Activated naive CD4-positive, alpha-beta T cell treated with anti-CD3 and anti-CD28 coated beads for 36 hours (primary cell): ENCODE measurements at regions of chr4 and their contacts with region 1.

Region 1: GRCh38 chr4:184474263-184475095 is at the start of gene IRF2:
- DNase-seq: peak; percentile 99
- H3K4me3 Mint-ChIP-seq: peak within 1 kb of the TSS; percentile 98
- H3K27ac Mint-ChIP-seq: peak within 1 kb of the TSS; percentile 100
- H3K4me1 Mint-ChIP-seq: peaks cover 49% of the 10 kb centered on the region
- H3K27me3 Mint-ChIP-seq: no peaks in the 10 kb centered on the region
- total RNA-seq, gene IRF2: 37.3 to 38.3 TPM

Region 2: DNA sequence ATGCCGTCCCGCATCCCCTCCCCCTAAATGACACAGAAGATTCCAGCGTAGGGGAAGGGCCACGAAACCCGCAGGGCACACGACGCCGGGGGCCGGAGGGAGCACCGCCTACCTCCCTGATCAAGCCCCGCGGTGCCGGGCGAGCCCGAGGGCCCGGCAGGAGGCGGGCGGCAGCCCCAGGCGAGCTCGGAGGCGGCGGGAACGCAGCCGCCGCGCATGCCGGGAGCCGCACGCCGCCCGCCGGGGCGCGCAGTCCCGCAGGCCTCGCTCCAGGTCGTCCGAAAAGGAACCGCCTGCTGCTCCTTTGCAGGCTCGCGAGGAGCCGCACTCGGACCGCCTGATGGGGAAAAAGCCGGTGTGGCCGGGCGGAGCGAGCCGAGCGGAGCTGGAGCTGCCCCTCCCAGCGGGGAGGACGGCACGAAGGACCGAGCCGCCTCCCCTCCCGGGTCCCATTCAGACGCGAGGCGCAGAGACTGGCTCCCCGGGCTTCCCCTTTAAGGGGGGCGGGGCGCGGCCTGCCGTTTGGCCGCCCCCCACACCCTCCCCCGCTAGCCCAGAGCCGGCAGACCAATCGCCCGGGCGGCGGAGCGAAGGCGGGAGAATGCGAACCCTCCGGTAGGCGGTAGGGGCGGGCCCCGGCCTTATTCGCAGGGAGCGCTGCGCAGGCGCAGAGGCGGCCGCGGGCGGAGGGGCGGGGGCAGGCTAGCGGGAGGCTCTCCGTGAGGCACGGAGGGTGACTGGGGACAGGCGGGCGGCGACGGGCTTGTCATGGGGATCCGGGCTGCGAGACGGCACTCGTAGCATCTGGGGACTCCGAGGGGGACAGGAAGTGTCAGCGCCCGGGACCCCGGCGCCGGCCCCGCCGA is 970.2 kb before region 1 on chr4:
- CTCF ChIA-PET with region 1: no interaction called
- intact Hi-C with region 1: loop called (anchors 10 kb)
- DNase-seq: peak; percentile 98
- H3K4me3 Mint-ChIP-seq: peak overlapping the region; percentile 91
- H3K27ac Mint-ChIP-seq: peak overlapping the region; percentile 93
- H3K4me1 Mint-ChIP-seq: peaks cover 39% of the 10 kb centered on the region
- H3K27me3 Mint-ChIP-seq: no peaks in the 10 kb centered on the region

Region 3: GRCh38 chr4:184074989-184075388 is 399.5 kb before region 1 on chr4:
- CTCF ChIA-PET with region 1: no interaction called
- intact Hi-C with region 1: no loop called
- DNase-seq: no peak
- H3K4me3 Mint-ChIP-seq: no peak overlapping the region
- H3K27ac Mint-ChIP-seq: no peak overlapping the region
- H3K4me1 Mint-ChIP-seq: no peaks in the 10 kb centered on the region
- H3K27me3 Mint-ChIP-seq: peaks cover 19% of the 10 kb centered on the region

Region 4: GRCh38 chr4:184310171-184310567 is 164.3 kb before region 1 on chr4:
- CTCF ChIA-PET with region 1: no interaction called
- intact Hi-C with region 1: loop called (anchors 2 kb)
- DNase-seq: peak; percentile 69
- H3K4me3 Mint-ChIP-seq: no peak overlapping the region
- H3K27ac Mint-ChIP-seq: no peak overlapping the region
- H3K4me1 Mint-ChIP-seq: peaks cover 32% of the 10 kb centered on the region
- H3K27me3 Mint-ChIP-seq: peaks cover 3% of the 10 kb centered on the region

Region 5: DNA sequence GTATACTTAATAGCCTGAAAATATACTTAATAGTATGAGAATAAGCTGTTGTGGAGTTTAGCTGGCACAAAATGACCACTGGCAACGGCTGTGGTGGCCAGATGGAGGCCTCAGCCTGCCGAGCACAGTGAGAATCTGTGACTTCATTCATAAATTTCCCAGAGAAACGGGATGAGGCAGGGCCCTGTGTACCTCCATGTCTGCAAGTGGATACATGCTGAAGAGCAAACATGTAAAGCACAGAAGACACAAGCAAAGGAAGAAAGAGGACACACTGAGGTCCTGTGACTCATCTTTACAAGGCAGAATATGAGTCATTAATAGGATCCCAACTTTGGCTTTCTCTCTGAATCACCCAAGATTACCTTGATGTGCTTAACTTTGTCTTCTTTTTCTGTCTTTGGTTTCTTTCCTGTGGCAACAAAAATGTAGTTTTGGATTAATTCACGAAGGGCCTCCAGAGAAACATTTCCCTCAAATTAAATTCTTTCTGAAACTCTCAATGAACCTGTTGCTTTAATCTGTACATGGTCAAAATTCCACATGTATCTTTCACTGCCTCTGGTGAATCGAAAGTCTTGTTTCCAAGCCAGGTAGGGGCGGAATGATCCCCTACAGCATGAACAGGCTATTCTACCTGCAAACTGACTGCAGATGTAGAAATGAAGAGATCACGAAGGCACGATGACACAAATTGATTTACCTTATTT is 56.5 kb before region 1 on chr4:
- CTCF ChIA-PET with region 1: no interaction called
- intact Hi-C with region 1: loop called (anchors 1 kb)
- DNase-seq: peak; percentile 27
- H3K4me3 Mint-ChIP-seq: no peak overlapping the region
- H3K27ac Mint-ChIP-seq: peak overlapping the region; percentile 73
- H3K4me1 Mint-ChIP-seq: peaks cover 84% of the 10 kb centered on the region
- H3K27me3 Mint-ChIP-seq: no peaks in the 10 kb centered on the region

Region 6: DNA sequence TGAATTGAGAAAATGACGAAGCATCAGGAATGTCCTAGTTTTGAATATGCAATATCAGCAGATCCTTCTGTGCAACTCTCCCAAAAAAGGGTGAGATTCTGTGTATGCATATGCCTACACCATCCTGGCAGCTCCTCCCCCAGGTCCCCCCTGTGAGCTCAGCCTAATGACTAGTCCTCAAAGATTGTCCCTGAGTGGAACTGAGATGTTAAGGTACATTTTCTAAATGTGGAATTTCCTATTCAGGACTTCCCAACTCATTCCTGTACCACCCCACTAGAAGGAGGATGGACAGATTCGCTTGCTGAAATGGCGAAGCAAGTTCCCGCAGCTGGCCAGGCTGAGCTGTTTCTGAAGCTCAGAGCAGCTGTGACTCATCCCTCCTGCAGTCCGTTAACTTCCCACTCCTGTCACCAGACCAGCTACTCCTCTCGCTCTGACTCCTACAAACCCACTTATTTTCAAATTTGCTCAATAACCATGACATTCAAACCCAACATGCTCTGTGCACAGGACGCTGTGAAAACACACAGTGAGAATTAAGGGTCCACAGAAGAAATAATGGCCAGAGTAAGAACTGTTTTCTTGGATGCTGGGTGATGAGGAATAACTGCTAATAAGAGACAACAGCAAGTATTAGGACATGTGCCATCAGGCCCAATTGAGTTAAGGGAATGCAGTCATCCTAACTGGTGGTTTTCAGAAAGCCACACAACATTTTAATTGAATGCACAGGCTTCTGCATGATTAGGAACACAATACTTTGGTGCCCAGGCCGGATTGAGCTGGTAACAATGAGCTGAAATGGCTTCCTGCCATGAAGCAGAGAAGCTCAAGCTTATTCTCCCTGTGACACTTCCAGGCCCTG is 39.9 kb after region 1 on chr4:
- CTCF ChIA-PET with region 1: interaction called, 8 read pairs
- intact Hi-C with region 1: loop called (anchors 1 kb)
- DNase-seq: peak; percentile 86
- H3K4me3 Mint-ChIP-seq: peak overlapping the region; percentile 23
- H3K27ac Mint-ChIP-seq: peak overlapping the region; percentile 66
- H3K4me1 Mint-ChIP-seq: peaks cover 35% of the 10 kb centered on the region
- H3K27me3 Mint-ChIP-seq: no peaks in the 10 kb centered on the region

Region 7: GRCh38 chr4:184733654-184734524 is 259.4 kb after region 1 on chr4 and contains the start of gene CENPU:
- CTCF ChIA-PET with region 1: no interaction called
- intact Hi-C with region 1: loop called (anchors 1 kb)
- DNase-seq: peak; percentile 97
- H3K4me3 Mint-ChIP-seq: peak within 1 kb of the TSS; percentile 97
- H3K27ac Mint-ChIP-seq: peak within 1 kb of the TSS; percentile 86
- H3K4me1 Mint-ChIP-seq: peaks cover 19% of the 10 kb centered on the region
- H3K27me3 Mint-ChIP-seq: no peaks in the 10 kb centered on the region
- total RNA-seq, gene CENPU: 78.7 to 91.5 TPM